Right ventricle myocardium inferior (tissue), 1 donor: ENCODE measurements at regions of chr20 and their contacts with region 1.

Region 1: DNA sequence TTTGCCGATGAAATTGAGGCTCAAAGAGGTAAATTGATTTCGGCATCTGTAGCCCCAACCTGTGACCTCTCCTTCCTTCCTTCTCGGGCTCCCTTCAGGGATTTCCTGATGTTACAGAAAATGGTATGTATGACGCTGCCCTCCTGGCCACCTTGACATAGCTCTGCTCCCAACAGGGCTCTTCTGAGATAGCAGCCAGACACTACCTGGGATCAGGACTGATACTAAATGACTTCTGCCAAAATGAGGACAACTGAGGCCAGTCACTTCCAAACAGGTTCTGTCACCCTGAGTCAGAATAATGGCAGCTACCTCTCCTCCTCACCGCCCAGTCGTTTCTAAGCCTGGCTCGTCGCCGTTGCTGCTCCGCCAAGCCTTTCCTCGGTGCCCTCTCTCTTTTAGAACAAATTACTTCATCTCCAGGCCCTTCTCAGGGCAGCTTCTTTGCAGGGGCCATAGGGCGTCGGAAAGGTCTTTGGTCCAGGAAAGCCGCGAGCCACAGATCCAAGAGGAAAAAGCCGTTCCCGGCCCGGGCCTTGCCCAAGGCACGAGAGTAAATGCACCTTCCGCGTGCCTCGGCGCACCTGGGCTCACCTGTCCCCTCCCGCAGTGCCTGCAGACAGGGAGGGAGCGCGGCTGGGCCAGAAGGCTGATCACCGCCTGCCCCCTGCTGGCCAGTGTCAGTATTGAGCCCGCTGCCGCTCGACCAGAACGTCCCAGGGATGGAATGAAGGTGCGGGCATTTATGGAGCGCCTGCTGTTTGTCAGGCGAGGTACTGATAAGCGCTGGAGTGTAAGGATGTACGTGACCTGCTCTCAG is 904 bp upstream of the LPIN3 start:
- DNase-seq: peak; percentile 92
- ATAC-seq: peak; percentile 78

Region 2: DNA sequence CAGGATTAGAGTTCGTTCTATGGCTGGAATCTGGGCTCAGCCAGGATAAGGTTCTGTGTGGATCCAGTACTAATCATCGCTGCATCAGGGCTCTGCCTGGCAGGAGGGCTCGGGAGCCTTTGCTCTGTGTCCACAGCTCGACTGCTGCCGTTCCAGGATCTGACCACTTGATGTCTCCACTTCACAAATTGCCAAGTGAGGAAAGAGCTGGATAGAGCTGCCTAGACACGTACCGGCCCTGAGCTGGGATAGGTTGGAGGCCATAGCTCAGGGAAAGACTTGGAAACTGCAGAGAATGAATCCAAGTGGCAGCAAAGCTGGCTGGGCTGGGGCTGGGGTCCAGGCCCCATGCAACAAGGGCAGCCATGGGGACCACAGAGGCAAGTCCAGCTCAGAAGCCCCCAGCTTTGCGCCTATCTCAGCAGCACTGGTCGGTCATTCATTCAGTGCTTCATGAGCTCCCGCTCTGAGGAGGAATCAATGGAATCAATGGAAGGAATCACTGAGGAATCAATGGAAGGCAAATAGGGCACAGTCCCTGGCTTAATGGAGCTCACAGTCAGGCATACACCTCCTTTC is 349.1 kb before region 1 on chr20:
- intact Hi-C with region 1: loop called (anchors 10 kb)
- DNase-seq: peak; percentile 76
- ATAC-seq: peak; percentile 98

Region 3: DNA sequence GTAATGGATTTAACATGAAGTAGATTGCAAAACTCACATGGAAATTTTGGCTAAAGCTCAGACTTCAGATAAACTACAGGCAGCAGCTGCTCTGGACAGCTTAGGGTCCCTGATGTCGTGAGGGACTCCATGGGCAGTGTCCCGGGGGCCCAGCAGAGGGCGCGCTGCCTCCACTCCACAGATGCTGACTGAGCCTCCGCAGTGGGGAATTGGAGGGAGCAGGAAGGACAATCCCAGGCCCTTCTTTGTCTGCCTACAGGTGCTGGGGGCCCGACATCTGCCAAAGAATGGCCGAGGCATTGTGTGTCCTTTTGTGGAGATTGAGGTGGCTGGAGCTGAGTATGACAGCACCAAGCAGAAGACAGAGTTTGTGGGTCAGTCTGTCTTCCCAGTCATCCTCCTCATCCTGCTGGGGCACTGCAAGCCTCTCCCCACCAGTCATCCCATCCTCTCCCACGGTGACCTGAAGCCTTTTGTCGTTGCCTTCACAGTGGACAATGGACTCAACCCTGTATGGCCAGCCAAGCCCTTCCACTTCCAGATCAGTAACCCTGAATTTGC is 166.5 kb before region 1 on chr20:
- intact Hi-C with region 1: loop called (anchors 1 kb)
- DNase-seq: peak; percentile 92
- ATAC-seq: peak; percentile 86

Region 4: DNA sequence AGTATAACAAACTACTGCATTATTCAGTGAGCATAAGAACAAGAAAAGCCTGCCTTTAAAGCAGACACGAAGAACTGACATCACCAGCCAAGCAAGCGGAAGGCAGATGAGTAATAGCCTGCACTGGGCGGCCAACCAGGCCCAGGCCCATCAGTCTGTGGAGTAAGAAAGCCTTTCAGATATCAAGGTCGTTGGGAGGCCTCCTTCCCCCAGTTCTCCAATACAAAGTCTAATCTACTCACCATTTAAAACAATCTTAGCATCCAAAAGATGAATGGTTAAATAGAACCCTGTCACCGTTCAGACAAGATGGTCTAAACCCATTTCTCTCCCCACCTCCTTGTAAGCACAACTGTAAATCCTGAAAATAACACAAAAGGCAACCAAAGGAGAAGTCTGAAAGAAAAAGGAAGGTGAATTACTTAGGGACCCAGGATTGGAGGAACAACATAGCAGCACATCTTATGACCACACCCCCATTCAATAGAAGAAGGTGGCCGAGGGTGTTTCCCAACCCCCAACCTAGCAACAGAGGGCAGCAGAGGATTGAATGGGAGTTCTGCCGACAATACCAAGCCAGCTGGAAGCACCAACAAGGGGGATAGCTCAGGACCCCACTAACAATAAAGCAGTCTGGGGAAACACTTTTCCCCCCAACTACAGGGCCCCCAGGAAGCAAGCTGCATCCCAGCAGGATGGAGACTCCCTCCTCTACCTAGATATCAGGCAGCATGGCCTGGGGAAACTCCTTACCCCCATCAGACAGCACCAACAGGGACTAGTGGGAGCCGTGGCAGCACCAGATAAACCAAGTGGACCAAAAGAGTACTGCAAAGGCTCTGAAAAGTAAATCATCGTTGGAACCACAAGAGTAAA is 90.1 kb before region 1 on chr20:
- intact Hi-C with region 1: loop called (anchors 5 kb)
- DNase-seq: peak; percentile 75
- ATAC-seq: peak; percentile 86

Region 5: GRCh38 chr20:41577129-41578009 is 237.7 kb after region 1 on chr20:
- intact Hi-C with region 1: no loop called
- DNase-seq: no peak
- ATAC-seq: no peak

Region 6: GRCh38 chr20:41617931-41618806 is 278.5 kb after region 1 on chr20 and contains the start of gene CHD6:
- intact Hi-C with region 1: loop called (anchors 5 kb)
- DNase-seq: peak; percentile 99
- ATAC-seq: peak; percentile 99
- total RNA-seq, gene CHD6: 33.0 TPM